ENCODE measurements at regions of chr4 and their contacts with region 1.

Region 1: GRCh38 chr4:2262143-2262943 is 434 bp upstream of the MXD4 start:
- DNase-seq: peak; percentile 100
- ATAC-seq: peak; percentile 96
- H3K4me3 ChIP-seq: peak overlapping the region; percentile 91
- H3K27ac ChIP-seq: peak overlapping the region; percentile 93
- H3K4me1 ChIP-seq: peaks cover 16% of the 10 kb centered on the region
- H3K27me3 ChIP-seq: no peaks in the 10 kb centered on the region

Region 2: DNA sequence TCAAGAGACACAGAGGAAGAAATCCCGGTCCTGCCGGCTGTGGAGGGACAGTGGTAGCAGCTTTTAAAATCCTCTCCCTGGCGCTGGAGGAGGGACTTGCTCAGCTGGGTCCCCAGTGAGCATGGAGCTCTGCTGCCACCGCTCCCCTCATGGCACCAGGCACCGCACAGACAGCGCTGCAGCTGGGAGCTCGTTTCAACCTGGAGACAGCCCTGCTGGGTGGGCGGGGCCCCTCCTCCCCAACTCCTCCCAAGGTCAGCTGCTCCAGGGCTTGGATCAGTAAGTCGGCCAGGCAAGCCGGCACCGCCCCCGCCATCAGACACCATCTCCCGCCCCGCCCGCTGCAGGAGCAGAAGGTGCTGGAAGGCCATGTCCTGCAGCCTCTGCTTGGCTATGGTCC is 139.7 kb after region 1 on chr4:
- intact Hi-C with region 1: loop called in 1 of 4 experiments (anchors 5 kb)
- DNase-seq: peak; percentile 58 to 86 (median 80)
- ATAC-seq: peak; percentile 85 to 86
- H3K4me3 ChIP-seq: peak overlapping the region; percentile 11
- H3K27ac ChIP-seq: no peak overlapping the region
- H3K4me1 ChIP-seq: peaks cover 2% of the 10 kb centered on the region
- H3K27me3 ChIP-seq: no peaks in the 10 kb centered on the region